ENCODE measurements at regions of chr2 and their contacts with region 1.

Region 1: DNA sequence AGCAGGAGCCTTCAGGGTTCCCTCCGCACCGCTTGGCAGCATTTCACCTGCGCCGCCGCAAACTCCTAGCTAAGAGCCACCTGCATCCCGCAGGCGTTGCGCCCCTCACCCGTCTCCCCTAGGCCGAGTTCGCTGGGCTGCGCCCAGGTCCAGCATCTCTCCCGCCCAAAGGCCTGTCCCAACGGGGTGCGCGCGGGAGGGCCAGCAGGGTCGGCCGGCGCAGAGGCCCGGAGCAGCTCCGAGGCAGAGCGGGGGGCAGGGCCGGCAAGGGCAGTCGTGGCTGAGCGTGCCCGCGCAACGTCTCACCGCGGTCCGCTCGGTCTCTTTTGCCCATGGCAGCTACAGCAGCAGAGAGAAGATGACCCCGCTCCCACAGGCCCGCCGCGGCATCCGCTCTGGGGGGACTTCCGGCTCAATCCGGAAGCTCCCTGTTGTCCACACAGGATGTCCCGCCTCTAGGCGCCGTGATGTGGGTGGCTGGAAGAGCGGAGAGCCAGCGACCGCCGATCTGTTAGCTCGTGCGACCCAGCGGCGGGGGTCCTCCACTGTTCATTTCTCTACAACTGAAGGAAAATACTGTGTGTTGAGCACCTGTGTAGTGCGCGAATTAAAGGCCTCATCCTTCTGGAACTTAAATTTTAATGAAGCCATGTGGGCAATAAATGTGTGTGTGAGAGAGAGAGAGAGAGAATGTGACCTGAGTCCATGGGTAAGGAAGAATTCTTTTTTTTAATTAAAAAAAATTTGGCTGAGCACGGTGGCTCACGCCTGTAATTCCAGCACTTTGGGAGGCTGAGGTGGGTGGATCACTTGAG is at the start of gene ERCC3:
- DNase-seq: peak; percentile 74
- total RNA-seq, gene ERCC3: 24.1 and 49.6 TPM in 2 replicates

Region 2: GRCh38 chr2:126831234-126832005 is 462.5 kb before region 1 on chr2:
- in situ Hi-C with region 1: no loop called
- DNase-seq: no peak

Region 3: DNA sequence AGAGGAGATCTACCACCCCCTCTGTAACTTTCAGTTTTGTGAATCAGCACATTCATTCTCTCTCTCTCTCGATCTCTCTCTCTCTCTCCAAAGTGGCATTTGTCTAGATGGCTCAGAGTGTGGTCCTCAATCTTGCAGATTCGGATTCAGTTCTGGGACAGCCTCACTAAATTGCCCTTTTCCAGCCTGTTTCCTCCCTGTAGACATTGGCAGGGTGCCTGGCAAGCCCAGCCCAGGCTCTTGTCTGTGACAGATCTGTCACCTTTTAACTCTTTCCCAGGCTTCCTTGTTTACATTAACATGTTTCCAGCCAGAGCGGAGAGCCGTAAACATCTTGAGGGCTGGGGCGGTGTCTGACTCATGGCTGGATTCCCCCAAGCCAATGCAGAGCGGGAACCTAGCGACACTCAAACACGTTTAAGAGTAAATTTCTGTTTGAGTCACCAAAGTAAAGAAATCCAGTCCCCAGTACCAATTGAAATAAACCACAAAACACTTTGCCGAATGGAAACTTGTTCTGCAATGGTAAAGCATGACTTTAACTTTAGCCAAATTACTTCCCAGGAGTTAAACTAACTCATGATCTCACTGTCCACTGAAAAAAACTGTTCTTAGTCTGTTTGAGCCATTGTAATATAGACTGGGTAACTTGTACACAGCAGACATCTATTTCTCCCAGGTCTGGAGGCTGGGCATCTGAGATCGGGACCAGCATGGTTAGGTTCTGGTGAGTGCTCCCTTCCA is 67.3 kb before region 1 on chr2:
- in situ Hi-C with region 1: loop called (anchors 10 kb)
- DNase-seq: peak; percentile 97

Region 4: GRCh38 chr2:127508631-127509034 is 214.7 kb after region 1 on chr2:
- in situ Hi-C with region 1: no loop called
- DNase-seq: peak; percentile 91

Measured in Caki2 (cell line).